ENCODE measurements at regions of chrX and their contacts with region 1.

Region 1: GRCh38 chrX:130028196-130028595 is 45.8 kb downstream of the BCORL1 start:
- DNase-seq: peak; percentile 2
- H3K4me3 ChIP-seq: no peak overlapping the region
- H3K27ac ChIP-seq: no peak overlapping the region
- H3K27me3 ChIP-seq: no peaks in the 10 kb centered on the region
- CTCF ChIP-seq: peak; percentile 61

Region 2: DNA sequence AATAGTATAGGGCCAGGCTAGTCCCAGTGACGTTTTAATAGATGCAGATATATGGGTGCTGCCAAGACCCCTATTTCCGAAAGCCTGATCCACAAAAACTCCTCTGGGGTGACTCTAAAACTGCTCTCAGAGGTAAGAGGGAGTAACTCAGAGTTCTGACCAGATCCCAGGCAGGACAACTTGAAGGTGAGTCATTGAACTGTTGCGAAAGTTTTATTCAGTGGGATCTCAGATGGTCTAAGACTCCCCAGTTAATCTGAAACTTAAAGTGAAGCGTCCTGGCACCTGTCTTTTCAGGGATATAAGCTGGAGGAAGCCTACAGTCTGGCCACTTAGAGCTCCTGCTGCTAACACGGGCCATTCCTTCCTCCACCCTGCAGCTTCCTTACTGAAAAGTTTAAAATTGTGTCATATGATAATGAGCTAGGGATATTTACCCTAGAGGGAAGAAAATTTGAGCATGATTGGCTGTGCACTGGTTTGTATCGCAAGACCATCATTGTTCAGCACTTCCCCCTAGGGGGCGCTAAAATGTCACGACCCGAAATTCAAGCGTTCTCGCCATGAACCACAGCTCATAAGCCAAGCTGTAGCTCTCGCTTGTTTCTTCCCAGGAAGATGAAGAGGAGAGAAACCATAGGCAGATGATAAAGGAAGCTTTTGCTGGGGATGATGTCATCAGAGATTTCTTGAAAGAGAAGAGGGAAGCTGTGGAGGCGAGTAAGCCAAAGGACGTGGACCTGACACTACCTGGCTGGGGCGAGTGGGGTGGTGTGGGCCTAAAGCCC is 102.7 kb before region 1 on chrX:
- CTCF ChIA-PET with region 1: interaction called, 86 read pairs
- POLR2A ChIA-PET with region 1: no interaction called
- DNase-seq: peak; percentile 53
- H3K4me3 ChIP-seq: no peak overlapping the region
- H3K27ac ChIP-seq: peak overlapping the region; percentile 52
- H3K27me3 ChIP-seq: no peaks in the 10 kb centered on the region
- CTCF ChIP-seq: peak; percentile 66

Region 3: GRCh38 chrX:130009658-130010223 is 18.5 kb before region 1 on chrX:
- CTCF ChIA-PET with region 1: no interaction called
- POLR2A ChIA-PET with region 1: no interaction called
- DNase-seq: no peak
- H3K4me3 ChIP-seq: no peak overlapping the region
- H3K27ac ChIP-seq: no peak overlapping the region
- H3K27me3 ChIP-seq: no peaks in the 10 kb centered on the region
- CTCF ChIP-seq: no peak

Region 4: GRCh38 chrX:130039847-130040246 is 11.7 kb after region 1 on chrX:
- CTCF ChIA-PET with region 1: interaction called, 19 read pairs
- POLR2A ChIA-PET with region 1: no interaction called
- DNase-seq: no peak
- H3K4me3 ChIP-seq: no peak overlapping the region
- H3K27ac ChIP-seq: no peak overlapping the region
- H3K27me3 ChIP-seq: no peaks in the 10 kb centered on the region
- CTCF ChIP-seq: no peak

Region 5: DNA sequence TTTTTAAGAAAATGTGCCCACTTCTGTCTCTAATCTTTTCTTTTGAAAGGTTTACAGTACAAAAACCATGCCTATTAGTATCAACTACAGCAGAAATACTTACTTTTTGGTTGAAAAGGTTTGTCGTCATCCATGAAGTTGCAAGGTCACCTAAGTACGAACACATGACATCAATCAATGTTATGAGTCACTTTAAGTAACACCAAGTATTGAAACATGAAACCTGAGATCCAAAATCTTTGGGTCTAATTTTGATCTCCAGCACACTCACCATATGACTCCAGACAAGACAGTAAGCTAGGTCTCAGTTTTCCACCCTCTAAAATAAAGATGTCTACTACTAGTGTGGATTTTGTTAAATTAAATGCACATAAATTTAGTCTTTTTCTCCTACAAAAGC is 232.1 kb after region 1 on chrX:
- CTCF ChIA-PET with region 1: no interaction called
- POLR2A ChIA-PET with region 1: no interaction called
- DNase-seq: no peak
- H3K4me3 ChIP-seq: no peak overlapping the region
- H3K27ac ChIP-seq: no peak overlapping the region
- H3K27me3 ChIP-seq: no peaks in the 10 kb centered on the region
- CTCF ChIP-seq: no peak